K562 (cell line): ENCODE measurements at regions of chr2 and their contacts with region 1.

Region 1: GRCh38 chr2:135010200-135010942 is 36.9 kb downstream of the MAP3K19 start:
- DNase-seq: no peak
- ATAC-seq: peak; percentile 67
- H3K4me3 ChIP-seq: no peak overlapping the region
- H3K27ac ChIP-seq: no peak overlapping the region
- H3K4me1 ChIP-seq: no peaks in the 10 kb centered on the region; a peak in 1 of 5 replicates
- H3K27me3 ChIP-seq: no peaks in the 10 kb centered on the region
- CTCF ChIP-seq: no peak
- EP300 ChIP-seq: no peak
- POLR2A ChIP-seq: no peak
- RAD21 ChIP-seq: no peak

Region 2: GRCh38 chr2:135113322-135113721 is 103.0 kb after region 1 on chr2:
- CTCF ChIA-PET with region 1: no interaction called
- POLR2A ChIA-PET with region 1: no interaction called
- in situ Hi-C with region 1: no loop called
- intact Hi-C with region 1: loop called (anchors 10 kb)
- DNase-seq: no peak
- ATAC-seq: no peak
- H3K4me3 ChIP-seq: no peak overlapping the region
- H3K27ac ChIP-seq: no peak overlapping the region
- H3K4me1 ChIP-seq: no peaks in the 10 kb centered on the region
- H3K27me3 ChIP-seq: no peaks in the 10 kb centered on the region
- CTCF ChIP-seq: no peak
- EP300 ChIP-seq: no peak
- POLR2A ChIP-seq: no peak
- RAD21 ChIP-seq: no peak

Region 3: GRCh38 chr2:135600915-135601314 is 590.5 kb after region 1 on chr2:
- CTCF ChIA-PET with region 1: no interaction called
- POLR2A ChIA-PET with region 1: no interaction called
- in situ Hi-C with region 1: no loop called
- intact Hi-C with region 1: no loop called
- DNase-seq: no peak
- ATAC-seq: no peak
- H3K4me3 ChIP-seq: no peak overlapping the region
- H3K27ac ChIP-seq: no peak overlapping the region
- H3K4me1 ChIP-seq: no peaks in the 10 kb centered on the region
- H3K27me3 ChIP-seq: no peaks in the 10 kb centered on the region
- CTCF ChIP-seq: peak in 2 of 3 experiments; percentile 5 to 49; a peak in 3 of 6 replicates
- EP300 ChIP-seq: no peak
- POLR2A ChIP-seq: no peak
- RAD21 ChIP-seq: peak; percentile 51 to 55

Region 4: GRCh38 chr2:135709992-135710391 is 699.6 kb after region 1 on chr2:
- CTCF ChIA-PET with region 1: interaction called, 13 read pairs
- POLR2A ChIA-PET with region 1: no interaction called
- in situ Hi-C with region 1: loop called (anchors 10 kb)
- intact Hi-C with region 1: no loop called
- DNase-seq: peak; percentile 60 to 70 (median 66)
- ATAC-seq: peak; percentile 90
- H3K4me3 ChIP-seq: no peak overlapping the region
- H3K27ac ChIP-seq: no peak overlapping the region
- H3K4me1 ChIP-seq: no peaks in the 10 kb centered on the region
- H3K27me3 ChIP-seq: no peaks in the 10 kb centered on the region
- CTCF ChIP-seq: peak; percentile 72 to 92 (median 87)
- EP300 ChIP-seq: no peak
- POLR2A ChIP-seq: no peak
- RAD21 ChIP-seq: peak; percentile 76 to 81